ENCODE measurements at regions of chr5 and their contacts with region 1.

Region 1: DNA sequence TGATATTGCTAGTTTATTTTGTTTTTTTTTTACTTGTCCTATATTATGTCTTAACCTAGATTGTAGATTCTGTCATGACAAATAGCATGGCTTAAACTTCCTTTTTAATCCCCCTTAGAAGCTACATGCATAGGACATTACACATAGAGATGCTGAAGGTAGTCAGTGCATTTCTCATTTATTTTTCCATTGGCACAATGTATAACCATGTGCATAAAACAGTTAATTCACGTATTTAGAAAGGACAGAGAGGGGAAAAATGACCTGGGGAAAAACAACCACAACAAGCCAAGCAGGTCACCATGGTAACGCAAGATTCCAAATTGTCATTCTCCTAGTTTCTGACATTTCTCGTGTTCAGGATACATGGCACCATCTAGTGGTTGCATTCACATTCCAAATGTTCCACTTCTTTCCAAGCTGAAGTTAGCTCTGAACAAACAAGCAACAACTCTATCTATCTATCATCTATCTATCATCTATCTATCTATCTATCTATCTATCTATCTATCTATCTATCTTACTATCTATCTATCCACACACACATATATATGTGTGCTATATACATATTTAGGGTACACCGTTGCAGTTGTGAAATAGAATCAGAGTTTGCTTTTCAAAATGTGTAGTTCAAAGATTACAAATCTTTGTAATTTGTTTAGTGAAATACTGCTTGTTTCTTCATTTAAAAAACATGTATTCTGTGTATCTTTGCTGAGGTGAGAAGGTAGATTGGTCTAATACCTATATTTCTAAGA is 487.2 kb upstream of the ST8SIA4 start:
- DNase-seq: peak in 3 of 14 experiments; percentile 27 to 43 (median 36)
- ATAC-seq: no peak
- H3K4me3 ChIP-seq: no peak overlapping the region
- H3K4me3 Mint-ChIP-seq: no peak overlapping the region
- H3K27ac ChIP-seq: no peak overlapping the region
- H3K27ac Mint-ChIP-seq: no peak overlapping the region
- H3K4me1 ChIP-seq: no peaks in the 10 kb centered on the region
- H3K4me1 Mint-ChIP-seq: no peaks in the 10 kb centered on the region
- H3K27me3 ChIP-seq: no peaks in the 10 kb centered on the region
- H3K27me3 Mint-ChIP-seq: no peaks in the 10 kb centered on the region
- CTCF ChIP-seq: peak; percentile 57

Region 2: GRCh38 chr5:100430268-100431195 is 959.8 kb before region 1 on chr5:
- CTCF ChIA-PET with region 1: no interaction called
- POLR2A ChIA-PET with region 1: no interaction called
- intact Hi-C with region 1: loop called (anchors 2 to 5 kb)
- DNase-seq: peak in 13 of 14 experiments; percentile 9 to 55 (median 25)
- ATAC-seq: no peak
- H3K4me3 ChIP-seq: no peak overlapping the region
- H3K4me3 Mint-ChIP-seq: no peak overlapping the region
- H3K27ac ChIP-seq: no peak overlapping the region
- H3K27ac Mint-ChIP-seq: no peak overlapping the region
- H3K4me1 ChIP-seq: no peaks in the 10 kb centered on the region
- H3K4me1 Mint-ChIP-seq: no peaks in the 10 kb centered on the region
- H3K27me3 ChIP-seq: no peaks in the 10 kb centered on the region
- H3K27me3 Mint-ChIP-seq: peaks cover 7% of the 10 kb centered on the region
- CTCF ChIP-seq: peak; percentile 86

Region 3: GRCh38 chr5:100479079-100479688 is 911.1 kb before region 1 on chr5:
- CTCF ChIA-PET with region 1: no interaction called
- POLR2A ChIA-PET with region 1: no interaction called
- intact Hi-C with region 1: loop called (anchors 2 to 10 kb)
- DNase-seq: peak in 4 of 14 experiments; percentile 5 to 49 (median 44)
- ATAC-seq: no peak
- H3K4me3 ChIP-seq: no peak overlapping the region
- H3K4me3 Mint-ChIP-seq: no peak overlapping the region
- H3K27ac ChIP-seq: no peak overlapping the region
- H3K27ac Mint-ChIP-seq: no peak overlapping the region
- H3K4me1 ChIP-seq: no peaks in the 10 kb centered on the region
- H3K4me1 Mint-ChIP-seq: no peaks in the 10 kb centered on the region
- H3K27me3 ChIP-seq: no peaks in the 10 kb centered on the region
- H3K27me3 Mint-ChIP-seq: no peaks in the 10 kb centered on the region
- CTCF ChIP-seq: peak; percentile 54

Region 4: GRCh38 chr5:100623719-100624118 is 766.6 kb before region 1 on chr5:
- CTCF ChIA-PET with region 1: no interaction called
- POLR2A ChIA-PET with region 1: no interaction called
- intact Hi-C with region 1: loop called (anchors 1 to 5 kb)
- DNase-seq: peak in 3 of 14 experiments; percentile 52 to 57 (median 56)
- ATAC-seq: no peak
- H3K4me3 ChIP-seq: no peak overlapping the region
- H3K4me3 Mint-ChIP-seq: no peak overlapping the region
- H3K27ac ChIP-seq: no peak overlapping the region
- H3K27ac Mint-ChIP-seq: no peak overlapping the region
- H3K4me1 ChIP-seq: no peaks in the 10 kb centered on the region
- H3K4me1 Mint-ChIP-seq: no peaks in the 10 kb centered on the region
- H3K27me3 ChIP-seq: no peaks in the 10 kb centered on the region
- H3K27me3 Mint-ChIP-seq: no peaks in the 10 kb centered on the region
- CTCF ChIP-seq: peak; percentile 67

Measured in CD4-positive, alpha-beta T cell (primary cell).